ENCODE measurements at regions of chr3 and their contacts with region 1.

Region 1: GRCh38 chr3:84165278-84165677 is 793.5 kb upstream of the CADM2 start:
- DNase-seq: no peak
- H3K4me3 Mint-ChIP-seq: no peak overlapping the region
- H3K27ac Mint-ChIP-seq: peak overlapping the region; percentile 21
- H3K4me1 Mint-ChIP-seq: peaks cover 8% of the 10 kb centered on the region
- H3K27me3 Mint-ChIP-seq: no peaks in the 10 kb centered on the region
- CTCF ChIP-seq: no peak

Region 2: GRCh38 chr3:83877910-83878309 is 287.4 kb before region 1 on chr3:
- CTCF ChIA-PET with region 1: no interaction called
- intact Hi-C with region 1: no loop called
- DNase-seq: no peak
- H3K4me3 Mint-ChIP-seq: no peak overlapping the region
- H3K27ac Mint-ChIP-seq: no peak overlapping the region
- H3K4me1 Mint-ChIP-seq: no peaks in the 10 kb centered on the region
- H3K27me3 Mint-ChIP-seq: no peaks in the 10 kb centered on the region
- CTCF ChIP-seq: no peak

Region 3: DNA sequence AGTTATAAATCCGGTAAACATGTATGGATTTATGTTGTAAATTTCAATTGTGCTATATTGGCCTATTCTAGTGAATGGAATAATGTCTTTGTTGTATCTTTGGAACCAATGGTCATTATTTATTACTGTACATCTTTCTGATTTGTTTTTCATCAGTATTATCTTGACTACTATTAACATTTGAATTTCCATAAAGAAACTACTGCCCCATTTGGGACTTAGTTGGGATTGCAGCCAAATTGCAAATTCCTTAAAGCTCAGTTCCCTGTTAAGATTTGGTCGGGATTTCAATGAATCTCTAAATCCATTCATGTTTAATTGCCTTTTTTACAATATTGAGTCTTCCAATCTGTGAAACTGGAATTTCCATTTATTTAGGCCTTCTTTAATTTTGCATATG is 28.9 kb before region 1 on chr3:
- CTCF ChIA-PET with region 1: no interaction called
- intact Hi-C with region 1: no loop called
- DNase-seq: no peak
- H3K4me3 Mint-ChIP-seq: no peak overlapping the region
- H3K27ac Mint-ChIP-seq: no peak overlapping the region
- H3K4me1 Mint-ChIP-seq: peaks cover 9% of the 10 kb centered on the region
- H3K27me3 Mint-ChIP-seq: no peaks in the 10 kb centered on the region
- CTCF ChIP-seq: peak; percentile 18

Region 4: GRCh38 chr3:84922682-84923081 is 757.4 kb after region 1 on chr3:
- CTCF ChIA-PET with region 1: no interaction called
- intact Hi-C with region 1: loop called (anchors 5 kb)
- DNase-seq: no peak
- H3K4me3 Mint-ChIP-seq: no peak overlapping the region
- H3K27ac Mint-ChIP-seq: no peak overlapping the region
- H3K4me1 Mint-ChIP-seq: no peaks in the 10 kb centered on the region
- H3K27me3 Mint-ChIP-seq: no peaks in the 10 kb centered on the region
- CTCF ChIP-seq: no peak